Heart left ventricle (tissue), 16 donors: ENCODE measurements at regions of chr11 and their contacts with region 1.

Region 1: GRCh38 chr11:33525789-33526188 is 174.8 kb downstream of the C11orf91 start:
- DNase-seq: no peak
- ATAC-seq: no peak
- H3K4me3 ChIP-seq: no peak overlapping the region
- H3K27ac ChIP-seq: no peak overlapping the region
- H3K4me1 ChIP-seq: no peaks in the 10 kb centered on the region
- H3K27me3 ChIP-seq: peaks cover 0 to 4% (median 0%) of the 10 kb centered on the region in 9 donors
- CTCF ChIP-seq: no peak
- POLR2A ChIP-seq: no peak

Region 2: DNA sequence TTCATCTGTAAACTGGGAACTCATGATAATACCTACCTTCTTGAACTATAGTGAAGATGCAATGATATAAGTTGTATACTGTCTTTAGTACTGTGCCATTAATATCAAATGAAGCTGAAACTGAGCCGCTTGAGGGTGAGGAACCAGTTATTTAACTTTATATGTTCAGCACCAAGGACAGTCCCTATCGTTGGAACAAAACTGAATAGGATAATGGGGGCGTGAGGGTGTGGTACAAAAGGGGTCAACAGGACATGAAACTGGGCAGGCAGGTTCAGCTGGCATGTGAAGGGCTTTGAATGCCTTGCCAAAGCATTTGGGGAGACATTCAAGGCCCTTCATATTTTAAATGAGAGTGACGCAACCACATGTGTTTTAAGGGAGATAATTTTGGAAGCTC is 62.3 kb after region 1 on chr11:
- intact Hi-C with region 1: loop called in 1 of 10 experiments (anchors 10 kb)
- DNase-seq: no peak
- ATAC-seq: no peak
- H3K4me3 ChIP-seq: no peak overlapping the region
- H3K27ac ChIP-seq: no peak overlapping the region
- H3K4me1 ChIP-seq: no peaks in the 10 kb centered on the region
- H3K27me3 ChIP-seq: peaks cover 0 to 2% (median 0%) of the 10 kb centered on the region in 9 donors
- CTCF ChIP-seq: no peak
- POLR2A ChIP-seq: no peak